ENCODE measurements at regions of chr1 and their contacts with region 1.

Region 1: GRCh38 chr1:61049850-61050540 is 32.4 kb upstream of the NFIA start:
- DNase-seq: peak; percentile 94 to 95
- ATAC-seq: peak; percentile 82 to 92 (median 86)
- H3K4me3 ChIP-seq: peak overlapping the region; percentile 64 to 91 (median 78)
- H3K27ac ChIP-seq: peak overlapping the region; percentile 92 to 100 (median 98)
- H3K4me1 ChIP-seq: peaks cover 5 to 50% (median 38%) of the 10 kb centered on the region in 9 donors
- H3K27me3 ChIP-seq: peaks cover 0 to 40% (median 0%) of the 10 kb centered on the region in 7 donors
- CTCF ChIP-seq: peak; percentile 94 to 99 (median 98)

Region 2: GRCh38 chr1:60281360-60281932 is 768.5 kb before region 1 on chr1:
- intact Hi-C with region 1: loop called in 1 of 10 experiments (anchors 10 kb)
- DNase-seq: peak; percentile 22 to 56
- ATAC-seq: peak; percentile 85 to 96 (median 90)
- H3K4me3 ChIP-seq: no peak overlapping the region
- H3K27ac ChIP-seq: no peak overlapping the region
- H3K4me1 ChIP-seq: peaks cover 0 to 19% (median 15%) of the 10 kb centered on the region in 9 donors
- H3K27me3 ChIP-seq: no peaks in the 10 kb centered on the region
- CTCF ChIP-seq: peak; percentile 83 to 95 (median 89)

Region 3: DNA sequence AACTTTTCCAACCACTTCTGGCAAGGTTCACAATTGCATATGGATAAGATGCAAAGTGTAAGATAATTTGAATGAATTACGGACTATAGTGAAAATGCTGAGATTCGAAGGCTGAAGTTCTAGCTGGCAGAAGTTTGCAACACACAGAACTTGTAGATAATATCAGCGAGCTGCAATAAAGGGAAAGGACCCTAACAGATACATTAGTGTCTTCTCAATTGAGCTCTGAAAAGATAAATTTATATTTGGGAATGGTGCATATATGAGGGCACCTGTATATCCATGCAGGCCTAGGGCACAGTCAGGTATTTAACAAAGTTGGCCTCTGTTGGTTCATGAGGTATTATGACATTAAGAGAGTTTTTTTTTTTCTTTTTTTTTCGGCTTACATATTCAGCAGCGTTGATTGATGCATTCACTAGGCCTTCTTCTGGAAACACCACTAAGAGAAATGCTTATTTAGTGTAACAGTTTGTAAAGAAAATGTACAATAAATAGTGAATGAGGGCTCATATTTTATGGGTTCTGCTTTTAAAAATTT is 34.6 kb after region 1 on chr1:
- intact Hi-C with region 1: loop called in 2 of 10 experiments (anchors 2 to 5 kb)
- DNase-seq: no peak
- ATAC-seq: no peak
- H3K4me3 ChIP-seq: peak overlapping the region; percentile 77 to 98 (median 86)
- H3K27ac ChIP-seq: peak overlapping the region; percentile 92 to 99 (median 98)
- H3K4me1 ChIP-seq: peaks cover under 1 to 73% (median 57%) of the 10 kb centered on the region in 9 donors
- H3K27me3 ChIP-seq: no peaks in the 10 kb centered on the region
- CTCF ChIP-seq: no peak

Region 4: DNA sequence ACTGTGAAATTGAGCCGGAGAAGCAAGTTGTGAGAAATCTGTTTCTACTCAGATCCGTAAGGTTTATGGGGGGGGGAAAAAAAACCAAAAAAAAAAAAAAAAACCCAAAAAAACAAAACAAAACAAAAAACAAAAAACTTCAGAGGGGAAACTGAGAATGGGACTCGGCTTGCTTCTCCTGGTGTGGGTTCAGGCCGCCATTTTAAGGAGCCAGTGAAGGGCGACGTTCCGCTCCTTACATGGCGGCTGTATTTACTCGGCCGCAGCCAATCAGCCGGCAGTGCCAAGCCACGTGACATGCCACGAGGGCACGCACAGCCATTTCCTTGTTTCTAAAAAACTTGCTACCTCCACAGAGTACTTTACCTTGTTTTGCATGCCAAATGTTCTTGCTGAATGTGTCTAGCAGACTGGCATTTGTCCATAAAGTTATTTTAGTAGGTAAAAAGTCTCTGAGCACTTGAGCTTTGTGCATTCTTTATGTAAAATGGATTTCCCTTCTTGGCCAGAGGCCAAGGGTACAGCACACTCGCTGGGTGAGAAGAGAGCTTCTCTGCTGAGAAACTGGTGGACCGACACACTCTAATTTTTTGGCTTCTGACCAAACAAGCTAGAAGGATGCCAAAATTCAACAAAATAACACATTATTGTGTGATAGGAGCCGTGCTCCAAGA is 134.2 kb after region 1 on chr1:
- intact Hi-C with region 1: loop called in 5 of 10 experiments (anchors 5 to 10 kb)
- DNase-seq: peak; percentile 92 to 95
- ATAC-seq: peak; percentile 93 to 98 (median 94)
- H3K4me3 ChIP-seq: peak overlapping the region in 9 of 10 donors; percentile 18 to 57 (median 48)
- H3K27ac ChIP-seq: peak overlapping the region; percentile 72 to 96 (median 88)
- H3K4me1 ChIP-seq: peaks cover 12 to 83% (median 67%) of the 10 kb centered on the region in 9 donors
- H3K27me3 ChIP-seq: no peaks in the 10 kb centered on the region
- CTCF ChIP-seq: no peak

Region 5: GRCh38 chr1:61270761-61271411 is 220.9 kb after region 1 on chr1:
- intact Hi-C with region 1: loop called in 1 of 10 experiments (anchors 10 kb)
- DNase-seq: no peak
- ATAC-seq: no peak
- H3K4me3 ChIP-seq: no peak overlapping the region
- H3K27ac ChIP-seq: no peak overlapping the region
- H3K4me1 ChIP-seq: peaks cover 0 to 46% (median 21%) of the 10 kb centered on the region in 9 donors
- H3K27me3 ChIP-seq: no peaks in the 10 kb centered on the region
- CTCF ChIP-seq: no peak

Region 6: DNA sequence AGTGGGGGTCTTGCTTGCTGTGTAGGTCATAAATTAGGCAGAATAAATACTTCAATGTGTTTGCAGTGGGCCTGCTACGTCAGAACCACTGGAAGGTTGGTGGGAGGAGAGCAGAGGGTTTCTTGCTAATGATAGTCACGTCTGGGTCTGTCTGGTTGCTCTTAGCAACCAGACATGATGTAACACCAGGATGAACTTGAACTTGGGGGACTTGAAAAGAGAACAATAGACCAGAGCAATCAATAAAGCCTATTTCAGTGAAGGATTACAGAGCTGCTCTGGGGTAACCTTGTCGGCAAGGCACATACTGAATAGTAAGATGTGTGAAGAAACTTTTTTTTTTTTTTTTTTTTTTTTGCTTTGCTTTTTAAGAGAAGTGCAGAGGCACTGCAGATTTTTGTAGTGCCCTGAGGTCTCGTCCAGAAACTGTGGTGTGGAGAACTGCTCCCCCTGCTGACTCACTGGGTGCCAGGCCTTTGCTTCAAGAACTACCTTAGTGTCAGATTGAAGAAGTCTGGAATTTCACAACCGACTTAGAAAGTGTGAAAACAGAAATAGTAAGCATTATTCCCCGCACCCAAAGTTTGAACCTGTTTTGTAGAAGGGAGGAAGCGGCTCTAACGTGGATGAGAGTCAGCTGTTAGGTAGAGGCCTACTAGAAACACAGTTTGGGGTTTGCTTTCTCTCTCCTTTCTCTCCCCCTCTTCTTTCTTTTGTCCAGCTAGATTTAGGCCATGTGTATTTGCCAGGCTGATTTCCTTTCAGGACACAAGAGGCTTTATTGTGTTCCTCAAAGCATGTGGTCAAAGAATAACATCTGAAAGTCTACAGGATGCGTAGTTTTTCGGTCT is 403.3 kb after region 1 on chr1:
- intact Hi-C with region 1: loop called in 9 of 10 experiments (anchors 1 to 5 kb)
- DNase-seq: peak; percentile 79 to 91
- ATAC-seq: peak; percentile 66 to 88 (median 78)
- H3K4me3 ChIP-seq: peak overlapping the region in 2 of 10 donors; percentile 1 to 9
- H3K27ac ChIP-seq: peak overlapping the region; percentile 51 to 91 (median 83)
- H3K4me1 ChIP-seq: peaks cover 33 to 68% (median 65%) of the 10 kb centered on the region in 9 donors
- H3K27me3 ChIP-seq: no peaks in the 10 kb centered on the region
- CTCF ChIP-seq: peak; percentile 49 to 88 (median 82)

Region 7: GRCh38 chr1:61851849-61852669 is 802.1 kb after region 1 on chr1:
- intact Hi-C with region 1: loop called in 7 of 10 experiments (anchors 5 to 10 kb)
- DNase-seq: peak in 1 of 2 donors; percentile 45
- ATAC-seq: peak in 7 of 8 donors; percentile 62 to 83 (median 67)
- H3K4me3 ChIP-seq: no peak overlapping the region
- H3K27ac ChIP-seq: no peak overlapping the region
- H3K4me1 ChIP-seq: peaks cover 0 to 8% (median 0%) of the 10 kb centered on the region in 9 donors
- H3K27me3 ChIP-seq: no peaks in the 10 kb centered on the region
- CTCF ChIP-seq: peak; percentile 39 to 86 (median 77)

Measured in heart right ventricle (tissue), 16 donors.